ENCODE measurements at regions of chr20 and their contacts with region 1.

Region 1: GRCh38 chr20:37192137-37192854 is 12.9 kb upstream of the MROH8 start:
- DNase-seq: peak; percentile 49 to 64 (median 55)
- H3K4me3 ChIP-seq: no peak overlapping the region
- H3K4me3 Mint-ChIP-seq: peak overlapping the region in 1 of 7 donors; percentile 10
- H3K27ac ChIP-seq: no peak overlapping the region
- H3K27ac Mint-ChIP-seq: peak overlapping the region; percentile 2 to 75 (median 34)
- H3K4me1 ChIP-seq: peaks cover 56% of the 10 kb centered on the region
- H3K4me1 Mint-ChIP-seq: peaks cover 68 to 83% (median 83%) of the 10 kb centered on the region in 3 donors
- H3K27me3 ChIP-seq: no peaks in the 10 kb centered on the region
- H3K27me3 Mint-ChIP-seq: no peaks in the 10 kb centered on the region

Region 2: DNA sequence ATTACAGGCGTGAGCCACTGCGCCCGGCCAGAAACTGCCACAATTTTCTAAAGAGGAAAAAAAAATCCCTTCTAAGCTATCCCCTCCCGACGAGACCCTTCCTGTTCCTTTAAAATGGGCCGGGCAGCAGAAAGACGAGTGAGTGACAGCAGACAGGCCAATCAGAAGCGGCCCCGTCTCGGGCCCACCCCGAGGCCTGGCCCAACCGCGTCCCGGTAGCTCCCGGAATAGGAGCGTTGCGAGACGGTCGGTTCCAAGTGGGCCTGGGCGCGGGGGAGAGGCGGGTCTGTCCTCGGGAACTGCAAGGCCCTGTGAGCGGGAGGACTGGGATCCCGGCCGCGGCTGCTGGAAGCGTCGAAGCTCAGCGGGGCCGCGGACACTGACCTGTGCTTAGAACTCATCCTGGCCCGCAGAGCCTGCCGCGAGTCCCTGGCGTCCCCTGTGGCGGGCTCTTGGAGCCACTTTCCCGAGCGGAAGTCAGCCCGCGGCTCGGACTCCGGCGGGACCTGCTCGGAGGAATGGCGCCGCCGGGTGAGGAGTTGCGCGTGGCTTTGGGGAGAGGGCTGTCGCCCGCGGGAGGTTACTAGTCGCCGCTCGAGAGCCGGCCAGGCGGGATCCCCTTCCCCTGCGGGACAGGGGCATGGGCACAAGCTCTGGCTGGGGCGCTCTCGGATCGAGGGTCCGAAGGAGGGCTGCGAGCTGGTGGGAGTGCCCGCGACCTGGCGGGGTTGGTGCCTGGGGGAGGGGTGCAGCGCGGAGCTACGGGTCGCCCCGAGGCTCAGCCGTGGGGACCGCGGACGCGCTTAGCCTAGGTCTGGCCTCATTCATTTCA is 13.2 kb before region 1 on chr20 and contains the starts of genes MROH8 and RPN2:
- CTCF ChIA-PET with region 1: interaction called, 51 read pairs
- POLR2A ChIA-PET with region 1: interaction called, 8 read pairs
- DNase-seq: peak; percentile 92 to 95 (median 94)
- H3K4me3 ChIP-seq: peak within 1 kb of the TSS; percentile 83
- H3K4me3 Mint-ChIP-seq: peak within 1 kb of the TSS; percentile 95 to 99 (median 99)
- H3K27ac ChIP-seq: peak within 1 kb of the TSS; percentile 90
- H3K27ac Mint-ChIP-seq: peak within 1 kb of the TSS; percentile 95 to 100 (median 99)
- H3K4me1 ChIP-seq: peaks cover 32% of the 10 kb centered on the region
- H3K4me1 Mint-ChIP-seq: peaks cover 38 to 49% (median 47%) of the 10 kb centered on the region in 3 donors
- H3K27me3 ChIP-seq: no peaks in the 10 kb centered on the region
- H3K27me3 Mint-ChIP-seq: no peaks in the 10 kb centered on the region
- total RNA-seq, gene MROH8: 1.6 to 3.0 TPM
- total RNA-seq, gene RPN2: 155 to 164 TPM

Region 3: DNA sequence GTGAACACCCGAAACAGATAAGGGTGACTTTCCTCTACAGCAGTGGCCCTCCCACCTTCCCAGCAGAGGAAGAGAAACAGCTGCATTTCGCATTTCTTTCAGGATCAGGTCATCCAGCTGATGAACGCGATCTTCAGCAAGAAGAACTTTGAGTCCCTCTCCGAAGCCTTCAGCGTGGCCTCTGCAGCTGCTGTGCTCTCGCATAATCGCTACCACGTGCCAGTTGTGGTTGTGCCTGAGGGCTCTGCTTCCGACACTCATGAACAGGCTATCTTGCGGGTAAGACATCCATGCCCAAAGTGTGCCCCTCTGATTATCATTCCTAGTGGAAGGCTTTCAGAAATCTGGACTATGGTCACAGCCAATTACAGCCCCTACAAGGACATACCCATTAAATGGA is 14.9 kb after region 1 on chr20:
- CTCF ChIA-PET with region 1: interaction called, 14 read pairs
- POLR2A ChIA-PET with region 1: no interaction called
- DNase-seq: no peak
- H3K4me3 ChIP-seq: no peak overlapping the region
- H3K4me3 Mint-ChIP-seq: no peak overlapping the region
- H3K27ac ChIP-seq: no peak overlapping the region
- H3K27ac Mint-ChIP-seq: peak overlapping the region in 1 of 8 donors; percentile 47
- H3K4me1 ChIP-seq: no peaks in the 10 kb centered on the region
- H3K4me1 Mint-ChIP-seq: peaks cover 1 to 4% (median 3%) of the 10 kb centered on the region in 3 donors
- H3K27me3 ChIP-seq: no peaks in the 10 kb centered on the region
- H3K27me3 Mint-ChIP-seq: no peaks in the 10 kb centered on the region

Region 4: DNA sequence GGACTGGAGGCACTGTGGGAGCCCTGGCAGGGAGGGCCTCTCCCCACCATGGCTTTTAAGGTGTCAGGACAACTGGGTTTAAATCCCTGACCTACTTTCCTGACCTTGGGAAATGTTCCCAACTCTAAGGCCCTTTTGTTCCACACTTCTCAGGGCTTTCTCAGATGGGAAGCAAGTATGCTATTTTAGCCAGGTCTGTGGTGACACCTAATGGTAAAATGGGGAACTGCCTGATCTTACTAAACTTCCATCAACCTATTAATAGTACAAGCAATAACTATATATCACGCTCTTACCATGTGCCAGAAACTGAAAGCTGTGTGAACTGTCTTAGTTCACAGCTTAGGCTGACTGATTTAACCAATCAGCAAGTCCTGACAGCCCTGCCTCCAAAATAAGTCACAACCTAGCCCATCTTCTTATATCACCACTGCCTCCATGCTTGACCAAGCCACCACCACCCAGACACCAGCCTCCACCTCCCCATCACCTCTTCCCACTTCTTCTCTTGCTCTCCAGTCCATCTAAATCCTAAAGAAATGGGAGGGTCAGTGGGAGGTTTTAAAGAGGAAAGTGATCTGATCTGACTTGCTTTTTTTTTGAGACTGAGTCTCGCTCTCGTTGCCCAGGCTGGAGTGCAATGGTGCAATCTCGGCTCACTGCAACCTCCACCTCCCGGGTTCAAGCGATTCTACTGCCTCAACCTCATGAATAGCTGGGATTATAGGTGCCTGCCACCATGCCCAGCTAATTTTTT is 342.3 kb after region 1 on chr20:
- CTCF ChIA-PET with region 1: interaction called, 34 read pairs
- POLR2A ChIA-PET with region 1: interaction called, 3 read pairs
- DNase-seq: peak in 3 of 5 donors; percentile 37 to 60 (median 58)
- H3K4me3 ChIP-seq: no peak overlapping the region
- H3K4me3 Mint-ChIP-seq: peak overlapping the region in 1 of 7 donors; percentile 8
- H3K27ac ChIP-seq: no peak overlapping the region
- H3K27ac Mint-ChIP-seq: peak overlapping the region in 1 of 8 donors; percentile 39
- H3K4me1 ChIP-seq: no peaks in the 10 kb centered on the region
- H3K4me1 Mint-ChIP-seq: peaks cover 0 to 3% (median 0%) of the 10 kb centered on the region in 3 donors
- H3K27me3 ChIP-seq: no peaks in the 10 kb centered on the region
- H3K27me3 Mint-ChIP-seq: peaks cover 9 to 14% of the 10 kb centered on the region in 2 donors